ENCODE measurements at regions of chr12 and their contacts with region 1.

Region 1: GRCh38 chr12:75827061-75827460 is 204.5 kb downstream of the PHLDA1 start:
- H3K4me3 ChIP-seq: no peak overlapping the region
- H3K27ac ChIP-seq: no peak overlapping the region
- H3K4me1 ChIP-seq: peaks cover 12% of the 10 kb centered on the region; the same call in 1 of the 2 replicates
- CTCF ChIP-seq: no peak

Region 2: DNA sequence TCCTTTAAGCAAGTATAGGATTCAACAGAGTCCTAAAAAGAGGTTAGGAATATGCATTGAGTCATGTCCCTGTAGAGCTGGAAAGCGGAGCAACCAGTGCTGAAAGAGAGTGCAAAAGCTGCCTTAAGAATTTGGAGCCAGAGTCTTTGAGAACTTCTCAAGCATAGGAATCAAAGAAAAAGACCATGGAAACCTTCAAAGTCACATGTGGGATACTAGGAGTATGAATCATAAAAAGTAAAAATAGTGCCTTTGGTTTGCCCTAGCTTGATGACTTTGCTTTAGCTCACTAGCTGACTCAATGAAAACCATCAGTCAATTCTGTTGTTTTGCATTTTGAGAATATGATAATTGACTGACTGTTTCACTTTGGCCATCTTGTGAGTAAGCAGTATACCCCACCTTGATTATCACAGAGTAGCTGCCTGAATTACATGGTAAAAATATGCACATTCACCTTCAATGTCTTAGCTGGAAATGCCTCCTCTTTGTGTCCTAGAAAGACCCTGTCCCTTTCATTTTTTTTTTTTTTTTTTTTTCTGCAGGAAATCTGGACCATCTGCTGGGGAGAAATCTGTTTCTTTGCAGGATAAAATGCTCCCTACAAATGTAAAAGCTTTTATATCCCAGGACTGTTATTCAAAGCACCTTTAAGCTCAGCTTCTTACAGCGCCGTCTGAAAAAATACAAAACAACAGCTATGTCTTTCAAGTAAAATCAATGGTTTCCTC is 67.1 kb before region 1 on chr12:
- CTCF ChIA-PET with region 1: no interaction called
- POLR2A ChIA-PET with region 1: interaction called, 10 read pairs
- H3K4me3 ChIP-seq: no peak overlapping the region
- H3K27ac ChIP-seq: no peak overlapping the region
- H3K4me1 ChIP-seq: no peaks in the 10 kb centered on the region; the same call in 1 of the 2 replicates
- CTCF ChIP-seq: no peak

Measured in HEK293 (cell line).